ENCODE measurements at regions of chr5 and their contacts with region 1.

Region 1: DNA sequence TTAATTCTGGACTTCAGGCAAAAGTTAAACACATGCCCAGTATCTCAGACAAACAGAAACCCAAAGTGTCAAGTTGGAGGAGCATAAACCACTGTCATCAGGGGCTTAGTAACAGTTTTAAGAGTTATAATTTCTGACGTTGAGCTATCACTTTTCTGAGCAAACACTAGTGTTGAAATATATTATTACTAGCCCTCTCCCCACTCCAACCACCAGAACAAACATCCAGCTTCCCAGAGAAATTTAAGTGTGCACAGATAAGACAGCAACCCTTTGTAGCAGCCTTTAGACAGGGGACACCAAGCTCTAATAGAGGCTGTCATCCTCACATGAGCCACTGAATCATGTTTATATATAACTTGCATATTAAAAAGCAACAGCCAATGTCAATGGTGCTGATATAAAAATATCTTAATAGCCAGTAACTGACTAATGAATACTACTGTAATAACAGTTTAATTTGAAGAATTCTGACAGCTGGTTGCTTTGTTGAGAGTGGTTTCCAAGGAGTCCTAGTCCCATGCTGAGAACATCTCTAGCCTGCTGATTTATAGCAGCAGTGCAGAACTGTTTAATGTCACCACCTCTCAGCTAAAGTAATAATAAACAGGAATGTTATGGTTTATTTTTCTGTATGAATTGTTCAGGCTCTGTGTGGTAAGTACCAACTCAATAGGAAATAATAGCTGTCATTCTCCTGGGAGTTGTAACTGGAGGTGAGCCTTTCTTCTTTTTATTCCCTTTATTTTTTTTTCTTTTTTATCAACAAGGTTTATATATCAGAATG is 528.7 kb upstream of the ZNF608 start:
- H3K4me3 ChIP-seq: no peak overlapping the region
- H3K27ac ChIP-seq: peak overlapping the region; percentile 82
- H3K4me1 ChIP-seq: peaks cover 30% of the 10 kb centered on the region
- CTCF ChIP-seq: no peak

Region 2: DNA sequence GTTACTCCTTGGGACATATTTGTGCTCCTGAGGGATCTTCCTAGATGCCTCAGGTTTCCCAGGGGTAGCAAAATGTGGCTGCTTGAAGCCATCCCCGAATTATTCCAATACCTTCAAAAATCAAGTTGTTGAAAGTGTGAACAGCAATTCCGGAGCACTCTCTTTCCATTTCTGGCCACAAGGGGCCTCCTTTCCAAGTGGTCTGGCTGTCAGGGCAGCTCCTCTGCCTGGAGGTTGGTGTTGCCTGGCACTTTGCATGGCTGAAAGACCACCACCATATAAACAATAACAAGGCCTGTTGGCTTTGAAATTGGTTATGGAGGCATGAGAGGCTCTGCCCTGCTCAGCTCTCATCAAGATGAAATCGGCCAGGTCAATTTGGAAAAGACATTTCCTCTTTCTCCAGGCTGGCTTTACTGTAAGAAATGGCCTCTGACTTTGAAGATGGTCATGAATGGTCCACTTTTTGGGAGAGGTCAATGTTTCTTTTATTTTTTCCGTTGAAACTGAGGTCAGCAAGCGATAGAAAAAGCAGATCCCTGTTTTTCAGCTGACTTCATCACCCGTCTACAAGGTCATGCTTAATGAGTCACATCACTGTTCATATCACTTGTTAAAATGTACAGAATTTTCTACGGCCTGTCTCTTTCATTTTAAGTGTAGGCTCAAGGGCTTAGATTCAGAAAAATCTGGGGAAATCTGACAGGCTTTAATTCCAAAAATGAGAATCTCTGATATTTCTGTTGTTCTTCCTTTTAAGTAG is 47.6 kb before region 1 on chr5:
- CTCF ChIA-PET with region 1: interaction called, 12 read pairs
- POLR2A ChIA-PET with region 1: no interaction called
- H3K4me3 ChIP-seq: no peak overlapping the region
- H3K27ac ChIP-seq: no peak overlapping the region
- H3K4me1 ChIP-seq: peaks cover 5% of the 10 kb centered on the region; the same call in 1 of the 2 replicates
- CTCF ChIP-seq: peak; percentile 52; the same call in 1 of the 2 replicates

Region 3: GRCh38 chr5:125450771-125451170 is 175.6 kb after region 1 on chr5:
- CTCF ChIA-PET with region 1: no interaction called
- POLR2A ChIA-PET with region 1: no interaction called
- H3K4me3 ChIP-seq: no peak overlapping the region
- H3K27ac ChIP-seq: no peak overlapping the region
- H3K4me1 ChIP-seq: 0 out of 2 replicates have a peak, but pooled peaks cover 7% of the 10 kb centered on the region
- CTCF ChIP-seq: no peak

Measured in HEK293 (cell line).